ENCODE measurements at regions of chr17 and their contacts with region 1.

Region 1: DNA sequence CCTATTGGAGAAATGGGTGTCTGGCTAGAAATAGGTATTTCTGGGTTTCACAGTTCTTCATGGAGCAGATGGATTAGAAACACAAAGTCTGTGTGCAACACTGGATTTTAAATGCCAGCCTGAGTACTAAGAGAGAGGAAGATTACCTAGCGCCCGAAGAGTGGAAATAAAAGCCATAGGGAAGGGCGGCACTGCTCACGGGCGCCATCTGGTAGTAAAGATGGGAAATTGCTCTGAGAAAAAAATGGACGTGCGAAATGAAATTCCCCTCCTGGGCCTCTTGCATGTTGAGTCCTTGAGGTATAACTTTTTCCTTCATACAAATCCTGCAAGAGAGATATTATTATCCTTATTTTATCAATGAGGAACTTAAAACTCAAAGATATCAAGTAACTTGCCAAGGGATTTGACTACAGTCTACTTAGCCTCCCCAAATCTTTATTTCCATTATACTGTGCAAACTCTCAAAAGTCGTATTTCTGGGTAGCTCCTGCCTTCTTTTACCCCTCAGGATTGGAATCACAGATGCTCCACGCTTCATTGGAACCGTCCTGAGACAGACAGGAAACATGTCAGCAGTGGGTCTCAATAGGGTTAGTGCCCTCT is 72.8 kb downstream of the MMD start:
- DNase-seq: peak; percentile 51 to 68
- H3K4me3 ChIP-seq: no peak overlapping the region
- H3K4me3 Mint-ChIP-seq: no peak overlapping the region
- H3K27ac Mint-ChIP-seq: no peak overlapping the region
- H3K4me1 ChIP-seq: no peaks in the 10 kb centered on the region
- H3K4me1 Mint-ChIP-seq: peaks cover 6% of the 10 kb centered on the region
- H3K27me3 ChIP-seq: no peaks in the 10 kb centered on the region
- H3K27me3 Mint-ChIP-seq: no peaks in the 10 kb centered on the region
- CTCF ChIP-seq: peak; percentile 83 to 92

Region 2: GRCh38 chr17:54992797-54993639 is 355.8 kb before region 1 on chr17:
- CTCF ChIA-PET with region 1: interaction called, 6 read pairs
- POLR2A ChIA-PET with region 1: no interaction called
- intact Hi-C with region 1: loop called (anchors 1 kb)
- DNase-seq: peak in 1 of 2 experiments; percentile 56
- H3K4me3 ChIP-seq: no peak overlapping the region
- H3K4me3 Mint-ChIP-seq: no peak overlapping the region
- H3K27ac Mint-ChIP-seq: no peak overlapping the region
- H3K4me1 ChIP-seq: no peaks in the 10 kb centered on the region
- H3K4me1 Mint-ChIP-seq: no peaks in the 10 kb centered on the region
- H3K27me3 ChIP-seq: no peaks in the 10 kb centered on the region
- H3K27me3 Mint-ChIP-seq: no peaks in the 10 kb centered on the region
- CTCF ChIP-seq: peak; percentile 60 to 64

Region 3: GRCh38 chr17:55053855-55054254 is 295.0 kb before region 1 on chr17:
- CTCF ChIA-PET with region 1: interaction called, 5 read pairs
- POLR2A ChIA-PET with region 1: no interaction called
- intact Hi-C with region 1: loop called (anchors 2 kb)
- DNase-seq: no peak
- H3K4me3 ChIP-seq: no peak overlapping the region
- H3K4me3 Mint-ChIP-seq: no peak overlapping the region
- H3K27ac Mint-ChIP-seq: no peak overlapping the region
- H3K4me1 ChIP-seq: no peaks in the 10 kb centered on the region
- H3K4me1 Mint-ChIP-seq: no peaks in the 10 kb centered on the region
- H3K27me3 ChIP-seq: no peaks in the 10 kb centered on the region
- H3K27me3 Mint-ChIP-seq: no peaks in the 10 kb centered on the region
- CTCF ChIP-seq: peak; percentile 17 to 47

Region 4: GRCh38 chr17:55238179-55238930 is 110.5 kb before region 1 on chr17:
- CTCF ChIA-PET with region 1: interaction called, 7 read pairs
- POLR2A ChIA-PET with region 1: no interaction called
- intact Hi-C with region 1: loop called (anchors 5 kb)
- DNase-seq: peak; percentile 97
- H3K4me3 ChIP-seq: peak overlapping the region; percentile 47
- H3K4me3 Mint-ChIP-seq: peak overlapping the region; percentile 81
- H3K27ac Mint-ChIP-seq: peak overlapping the region; percentile 73
- H3K4me1 ChIP-seq: no peaks in the 10 kb centered on the region
- H3K4me1 Mint-ChIP-seq: peaks cover 16% of the 10 kb centered on the region
- H3K27me3 ChIP-seq: no peaks in the 10 kb centered on the region
- H3K27me3 Mint-ChIP-seq: no peaks in the 10 kb centered on the region
- CTCF ChIP-seq: peak in 1 of 2 experiments; percentile 10

Region 5: DNA sequence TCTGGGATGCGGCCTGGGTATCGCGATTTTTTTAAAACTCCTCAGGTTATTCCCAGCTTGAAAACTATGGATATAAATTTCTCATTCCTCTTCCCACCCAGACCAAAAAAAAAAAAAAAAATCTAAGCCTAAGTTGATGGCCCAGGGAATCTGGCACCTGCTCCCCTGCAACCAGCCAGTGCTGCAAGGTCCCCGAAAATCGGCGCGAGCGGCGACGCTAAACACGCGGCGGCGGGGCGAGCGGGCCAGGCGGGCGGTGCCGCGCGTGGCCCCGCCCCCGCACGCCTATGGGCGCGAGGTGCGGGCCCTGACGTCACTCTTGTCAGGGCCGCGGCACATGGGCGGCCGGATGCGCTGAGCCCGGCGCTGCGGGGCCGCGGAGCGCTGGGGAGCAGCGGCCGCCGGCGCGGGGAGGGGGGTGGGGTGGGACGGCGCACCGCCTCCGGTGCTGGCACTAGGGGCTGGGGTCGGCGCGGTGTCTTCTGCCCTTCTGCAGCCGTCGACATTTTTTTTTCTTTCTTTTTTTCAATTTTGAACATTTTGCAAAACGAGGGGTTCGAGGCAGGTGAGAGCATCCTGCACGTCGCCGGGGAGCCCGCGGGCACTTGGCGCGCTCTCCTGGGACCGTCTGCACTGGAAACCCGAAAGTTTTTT is 84.1 kb before region 1 on chr17 and contains the start of gene HLF:
- CTCF ChIA-PET with region 1: interaction called, 4 read pairs
- POLR2A ChIA-PET with region 1: no interaction called
- intact Hi-C with region 1: loop called (anchors 1 kb)
- DNase-seq: peak; percentile 83 to 91
- H3K4me3 ChIP-seq: peak within 1 kb of the TSS; percentile 66
- H3K4me3 Mint-ChIP-seq: peak within 1 kb of the TSS; percentile 84
- H3K27ac Mint-ChIP-seq: peak within 1 kb of the TSS; percentile 39
- H3K4me1 ChIP-seq: no peaks in the 10 kb centered on the region
- H3K4me1 Mint-ChIP-seq: peaks cover 14% of the 10 kb centered on the region
- H3K27me3 ChIP-seq: no peaks in the 10 kb centered on the region
- H3K27me3 Mint-ChIP-seq: no peaks in the 10 kb centered on the region
- CTCF ChIP-seq: no peak
- total RNA-seq, gene HLF: 17.3 and 19.8 TPM in 2 replicates

Region 6: DNA sequence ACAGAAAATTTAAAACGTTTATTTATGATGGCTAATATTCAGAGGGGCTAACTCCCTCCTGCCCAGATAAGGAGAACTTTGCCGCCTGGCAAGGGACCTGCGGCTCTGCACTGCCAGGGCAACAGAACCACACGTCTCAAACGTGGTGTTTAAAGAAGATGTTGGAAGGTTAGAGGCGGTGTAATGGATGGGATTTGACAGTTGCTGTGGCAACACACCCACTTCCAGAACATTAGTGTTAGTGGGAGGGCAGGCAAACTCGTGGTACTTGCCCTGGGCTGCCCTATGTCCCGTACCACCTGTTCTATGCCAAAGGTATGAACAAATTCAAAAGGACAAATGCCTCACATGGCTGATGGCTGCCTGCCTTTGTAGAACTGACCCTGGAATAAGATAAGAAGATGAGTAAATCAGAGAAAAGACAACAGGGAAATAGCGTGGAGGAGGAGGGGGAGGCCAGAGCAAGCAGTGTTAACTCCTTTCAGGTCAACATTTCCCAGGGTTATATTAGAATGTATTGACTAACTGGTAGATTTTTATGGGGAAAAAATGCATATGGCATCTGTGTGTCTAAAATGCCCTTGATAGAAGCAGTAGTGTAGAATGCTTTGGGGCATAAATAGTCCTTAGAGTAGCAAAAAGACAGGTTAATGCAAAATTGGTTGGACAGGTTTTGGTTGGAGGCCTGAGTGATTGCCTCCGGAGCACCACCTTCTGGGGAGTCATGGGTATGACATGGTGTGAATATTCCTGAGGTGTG is 53.3 kb before region 1 on chr17:
- CTCF ChIA-PET with region 1: interaction called, 3 read pairs
- POLR2A ChIA-PET with region 1: no interaction called
- intact Hi-C with region 1: loop called (anchors 1 kb)
- DNase-seq: peak; percentile 70 to 84
- H3K4me3 ChIP-seq: no peak overlapping the region
- H3K4me3 Mint-ChIP-seq: peak overlapping the region; percentile 35
- H3K27ac Mint-ChIP-seq: peak overlapping the region; percentile 20
- H3K4me1 ChIP-seq: peaks cover 20% of the 10 kb centered on the region
- H3K4me1 Mint-ChIP-seq: peaks cover 13% of the 10 kb centered on the region
- H3K27me3 ChIP-seq: no peaks in the 10 kb centered on the region
- H3K27me3 Mint-ChIP-seq: no peaks in the 10 kb centered on the region
- CTCF ChIP-seq: peak; percentile 89 to 92

Region 7: DNA sequence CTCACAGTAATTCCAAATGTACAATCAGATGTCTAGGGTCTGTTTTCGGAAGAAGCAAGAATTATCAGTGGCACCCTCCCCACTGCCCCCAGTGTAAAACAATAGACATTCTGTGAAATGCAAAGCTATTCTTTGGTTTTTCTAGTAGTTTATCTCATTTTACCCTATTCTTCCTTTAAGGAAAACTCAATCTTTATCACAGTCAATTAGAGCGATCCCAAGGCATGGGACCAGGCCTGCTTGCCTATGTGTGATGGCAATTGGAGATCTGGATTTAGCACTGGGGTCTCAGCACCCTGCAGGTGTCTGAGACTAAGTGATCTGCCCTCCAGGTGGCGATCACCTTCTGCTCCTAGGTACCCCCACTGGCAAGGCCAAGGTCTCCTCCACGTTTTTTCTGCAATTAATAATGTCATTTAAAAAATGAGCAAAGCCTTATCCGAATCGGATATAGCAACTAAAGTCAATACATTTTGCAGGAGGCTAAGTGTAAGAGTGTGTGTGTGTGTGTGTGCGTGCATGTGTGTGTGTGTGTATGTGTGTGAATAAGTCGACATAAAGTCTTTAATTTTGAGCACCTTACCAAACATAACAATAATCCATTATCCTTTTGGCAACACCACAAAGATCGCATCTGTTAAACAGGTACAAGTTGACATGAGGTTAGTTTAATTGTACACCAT is 24.4 kb before region 1 on chr17:
- CTCF ChIA-PET with region 1: no interaction called
- POLR2A ChIA-PET with region 1: no interaction called
- intact Hi-C with region 1: loop called (anchors 1 kb)
- DNase-seq: peak in 1 of 2 experiments; percentile 34
- H3K4me3 ChIP-seq: no peak overlapping the region
- H3K4me3 Mint-ChIP-seq: no peak overlapping the region
- H3K27ac Mint-ChIP-seq: no peak overlapping the region
- H3K4me1 ChIP-seq: peaks cover 22% of the 10 kb centered on the region
- H3K4me1 Mint-ChIP-seq: peaks cover 9% of the 10 kb centered on the region
- H3K27me3 ChIP-seq: no peaks in the 10 kb centered on the region
- H3K27me3 Mint-ChIP-seq: no peaks in the 10 kb centered on the region
- CTCF ChIP-seq: peak; percentile 21 to 50

Region 8: DNA sequence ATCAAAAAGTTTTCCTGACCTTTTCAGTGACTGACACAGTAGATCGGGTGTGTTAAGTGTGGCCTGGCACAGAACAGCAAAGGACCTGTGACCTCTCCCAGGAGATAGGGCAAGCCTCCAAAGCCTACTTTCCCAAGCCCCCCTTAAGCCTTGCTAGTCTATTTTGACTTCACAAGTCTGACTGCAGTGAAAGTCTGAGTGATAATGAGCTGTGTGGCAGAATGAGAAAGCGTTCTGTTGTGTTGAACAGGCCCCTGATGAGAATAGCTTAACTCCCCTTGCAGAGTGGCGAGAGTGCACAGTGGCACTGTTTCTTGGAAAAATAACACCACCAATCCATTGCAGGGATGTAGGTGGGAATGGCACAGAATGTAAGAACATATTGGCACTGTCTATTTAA is 40.0 kb after region 1 on chr17:
- CTCF ChIA-PET with region 1: no interaction called
- POLR2A ChIA-PET with region 1: no interaction called
- intact Hi-C with region 1: no loop called
- DNase-seq: no peak
- H3K4me3 ChIP-seq: no peak overlapping the region
- H3K4me3 Mint-ChIP-seq: no peak overlapping the region
- H3K27ac Mint-ChIP-seq: no peak overlapping the region
- H3K4me1 ChIP-seq: no peaks in the 10 kb centered on the region
- H3K4me1 Mint-ChIP-seq: no peaks in the 10 kb centered on the region
- H3K27me3 ChIP-seq: no peaks in the 10 kb centered on the region
- H3K27me3 Mint-ChIP-seq: no peaks in the 10 kb centered on the region
- CTCF ChIP-seq: no peak

Region 9: DNA sequence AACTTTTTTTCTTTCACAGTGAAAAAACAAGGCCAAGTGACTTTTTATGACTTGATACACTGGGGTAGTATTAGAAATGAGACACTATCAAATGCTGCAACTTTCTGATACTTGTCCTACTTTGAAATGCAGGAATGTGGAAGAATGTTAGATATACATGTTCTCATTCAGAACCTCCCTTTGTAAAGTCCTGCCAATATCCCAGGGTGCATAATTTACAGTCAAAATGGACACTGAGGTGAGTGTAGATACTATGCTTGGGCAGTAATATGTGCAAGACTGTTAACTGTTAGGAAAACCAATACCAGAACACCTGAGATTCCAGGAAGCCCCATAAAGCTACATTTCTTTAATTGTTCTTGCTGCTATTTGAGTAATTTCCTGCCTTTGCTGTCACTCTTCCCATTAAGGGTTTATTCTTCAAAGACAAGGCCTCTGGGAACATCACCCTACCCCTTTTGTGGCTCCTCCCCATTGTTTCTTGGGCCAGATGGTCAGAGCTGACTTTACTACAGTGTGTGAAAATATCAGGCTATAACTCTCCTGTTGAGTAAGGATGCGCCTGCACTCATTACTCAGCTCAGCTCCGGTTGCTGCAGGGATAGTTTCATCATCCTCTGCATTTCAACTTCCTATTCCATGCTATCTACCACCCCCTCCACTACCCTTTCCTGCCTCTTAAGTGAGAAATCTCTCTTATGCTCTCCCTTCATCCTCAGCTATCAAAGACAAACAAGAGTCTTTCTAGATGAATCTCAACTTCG is 325.1 kb after region 1 on chr17:
- CTCF ChIA-PET with region 1: no interaction called
- POLR2A ChIA-PET with region 1: no interaction called
- intact Hi-C with region 1: no loop called
- DNase-seq: no peak
- H3K4me3 ChIP-seq: no peak overlapping the region
- H3K4me3 Mint-ChIP-seq: no peak overlapping the region
- H3K27ac Mint-ChIP-seq: no peak overlapping the region
- H3K4me1 ChIP-seq: no peaks in the 10 kb centered on the region
- H3K4me1 Mint-ChIP-seq: no peaks in the 10 kb centered on the region
- H3K27me3 ChIP-seq: no peaks in the 10 kb centered on the region
- H3K27me3 Mint-ChIP-seq: peaks cover 26% of the 10 kb centered on the region
- CTCF ChIP-seq: no peak

Measured in Caco-2 (cell line).